OCI-LY7 (cell line): ENCODE measurements at regions of chr9 and their contacts with region 1.

Region 1: GRCh38 chr9:87557996-87558395 is 60.3 kb downstream of the DAPK1 start:
- DNase-seq: no peak
- H3K4me3 ChIP-seq: no peak overlapping the region
- H3K27ac ChIP-seq: no peak overlapping the region
- H3K4me1 ChIP-seq: peaks cover 49% of the 10 kb centered on the region
- CTCF ChIP-seq: no peak

Region 2: GRCh38 chr9:87336914-87337333 is 221.1 kb before region 1 on chr9:
- CTCF ChIA-PET with region 1: no interaction called
- POLR2A ChIA-PET with region 1: no interaction called
- intact Hi-C with region 1: loop called (anchors 2 kb)
- DNase-seq: peak; percentile 71
- H3K4me3 ChIP-seq: no peak overlapping the region
- H3K27ac ChIP-seq: no peak overlapping the region
- H3K4me1 ChIP-seq: no peaks in the 10 kb centered on the region
- CTCF ChIP-seq: peak; percentile 87

Region 3: DNA sequence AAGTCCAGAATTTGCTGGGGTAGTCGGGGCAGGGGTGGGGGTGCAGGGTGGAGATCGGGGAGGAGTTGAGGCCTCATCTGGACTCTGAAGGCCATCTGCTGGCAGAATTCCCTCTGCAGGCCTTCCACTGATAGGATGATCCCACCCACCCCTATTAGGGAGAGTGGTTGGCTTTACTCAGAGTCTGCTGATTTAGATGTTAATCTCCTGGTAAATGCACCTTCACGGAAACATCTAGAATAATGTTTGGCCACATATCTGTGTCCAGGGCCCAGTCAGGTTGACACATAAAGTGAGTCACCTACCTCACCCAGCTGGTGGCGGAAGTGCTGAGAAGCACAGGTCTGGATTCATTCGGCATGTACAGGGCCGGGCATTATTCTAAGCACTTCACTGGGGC is 10.3 kb before region 1 on chr9:
- CTCF ChIA-PET with region 1: no interaction called
- POLR2A ChIA-PET with region 1: interaction called, 15 read pairs
- intact Hi-C with region 1: no loop called
- DNase-seq: no peak
- H3K4me3 ChIP-seq: no peak overlapping the region
- H3K27ac ChIP-seq: no peak overlapping the region
- H3K4me1 ChIP-seq: peaks cover 43% of the 10 kb centered on the region
- CTCF ChIP-seq: no peak

Region 4: GRCh38 chr9:87581513-87581912 is 23.5 kb after region 1 on chr9:
- CTCF ChIA-PET with region 1: interaction called, 4 read pairs
- POLR2A ChIA-PET with region 1: interaction called, 13 read pairs
- intact Hi-C with region 1: no loop called
- DNase-seq: no peak
- H3K4me3 ChIP-seq: no peak overlapping the region
- H3K27ac ChIP-seq: no peak overlapping the region
- H3K4me1 ChIP-seq: peaks cover 3% of the 10 kb centered on the region
- CTCF ChIP-seq: no peak

Region 5: GRCh38 chr9:87662808-87663528 is 105.0 kb after region 1 on chr9:
- CTCF ChIA-PET with region 1: no interaction called
- POLR2A ChIA-PET with region 1: interaction called, 5 read pairs
- intact Hi-C with region 1: loop called (anchors 2 kb)
- DNase-seq: peak; percentile 60
- H3K4me3 ChIP-seq: no peak overlapping the region
- H3K27ac ChIP-seq: no peak overlapping the region
- H3K4me1 ChIP-seq: peaks cover 7% of the 10 kb centered on the region
- CTCF ChIP-seq: peak; percentile 82